OCI-LY7 (cell line): ENCODE measurements at regions of chr6 and their contacts with region 1.

Region 1: DNA sequence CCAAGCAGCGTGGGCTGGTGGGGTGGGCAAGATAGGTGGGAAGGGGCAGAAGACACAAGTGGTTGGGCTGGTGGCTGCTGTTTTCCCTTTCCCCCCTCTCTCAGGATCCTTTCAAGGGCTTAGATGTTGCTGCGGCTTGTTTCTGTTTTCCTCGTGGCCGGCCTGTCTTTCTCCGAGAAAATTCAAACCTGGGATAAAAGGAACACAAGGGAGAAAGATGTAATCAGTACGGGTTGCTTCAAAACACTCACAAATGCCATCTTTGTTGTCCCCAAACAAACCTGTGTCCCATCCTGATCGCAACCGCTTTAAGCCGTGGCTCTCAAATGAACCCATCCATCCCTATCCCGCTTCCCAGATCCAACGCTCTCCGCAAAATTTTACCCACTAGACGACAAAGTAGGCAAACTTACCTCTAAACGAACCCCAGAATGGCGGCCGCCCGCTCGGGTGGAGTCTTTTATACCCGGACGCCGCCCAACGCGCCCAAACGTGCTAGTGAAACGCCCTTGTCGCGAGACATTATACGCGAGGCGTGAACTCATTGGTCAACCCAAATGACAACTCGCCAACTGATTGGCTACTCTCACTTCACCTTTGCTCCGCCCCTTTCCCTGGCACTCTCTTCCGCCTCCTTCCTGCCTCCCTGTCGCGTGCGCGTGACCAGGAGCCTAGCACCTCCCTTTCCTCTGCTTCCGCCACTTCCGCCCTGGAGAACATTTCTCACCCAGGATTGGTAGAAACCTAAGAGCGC is at the start of gene PPP1R10:
- DNase-seq: peak; percentile 100
- H3K4me3 ChIP-seq: peak within 1 kb of the TSS; percentile 88
- H3K27ac ChIP-seq: peak within 1 kb of the TSS; percentile 91
- H3K4me1 ChIP-seq: peaks cover 37% of the 10 kb centered on the region
- CTCF ChIP-seq: no peak
- total RNA-seq, gene PPP1R10: 103 and 126 TPM in 2 replicates

Region 2: GRCh38 chr6:30378290-30378937 is 238.6 kb before region 1 on chr6:
- CTCF ChIA-PET with region 1: no interaction called
- POLR2A ChIA-PET with region 1: no interaction called
- intact Hi-C with region 1: no loop called
- DNase-seq: peak; percentile 8
- H3K4me3 ChIP-seq: no peak overlapping the region
- H3K27ac ChIP-seq: no peak overlapping the region
- H3K4me1 ChIP-seq: no peaks in the 10 kb centered on the region
- CTCF ChIP-seq: no peak

Region 3: DNA sequence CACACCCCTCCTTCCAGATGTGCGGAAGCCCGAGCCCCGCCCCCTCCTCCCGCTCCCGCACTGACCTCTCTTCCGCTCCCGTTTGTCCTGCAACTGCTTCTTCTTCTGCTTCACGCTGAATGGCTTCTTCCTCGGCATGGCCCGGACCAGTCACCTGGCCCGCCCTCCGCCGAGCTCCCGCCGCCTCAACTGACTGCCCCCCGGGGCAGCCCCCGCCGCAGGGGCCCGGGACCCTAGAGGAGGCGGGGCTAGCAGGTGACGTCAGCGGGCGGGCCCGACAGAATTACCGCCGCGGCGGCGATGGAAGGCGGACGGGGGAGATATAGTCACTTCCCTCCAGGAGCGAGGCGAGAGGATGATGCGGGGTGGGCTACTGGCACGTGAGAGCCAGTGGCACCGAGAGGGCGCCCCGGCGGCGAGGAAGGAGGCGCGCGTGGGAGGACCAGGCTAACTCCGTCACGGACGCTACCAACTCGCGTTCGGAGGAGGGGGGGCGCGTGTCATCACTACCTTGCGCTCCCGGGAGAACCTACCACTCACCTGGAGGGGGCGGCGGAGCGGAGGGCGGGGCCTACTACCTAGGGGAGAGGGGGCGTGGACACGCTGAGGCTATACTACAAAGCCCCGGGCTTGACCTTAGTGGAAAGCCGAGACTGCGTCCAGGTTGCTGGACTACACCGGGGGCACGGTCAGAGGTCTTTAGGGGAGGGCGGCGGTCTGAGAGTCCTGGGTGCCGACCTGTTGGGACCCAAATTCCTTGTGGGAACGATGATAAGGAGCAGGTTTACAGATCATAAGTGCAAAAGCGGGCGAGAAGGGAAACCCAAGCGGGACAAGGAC is 60.7 kb before region 1 on chr6 and contains the start of gene GNL1:
- CTCF ChIA-PET with region 1: no interaction called
- POLR2A ChIA-PET with region 1: no interaction called
- intact Hi-C with region 1: loop called (anchors 2 kb)
- DNase-seq: peak; percentile 97
- H3K4me3 ChIP-seq: peak within 1 kb of the TSS; percentile 84
- H3K27ac ChIP-seq: peak within 1 kb of the TSS; percentile 89
- H3K4me1 ChIP-seq: peaks cover 18% of the 10 kb centered on the region
- CTCF ChIP-seq: no peak
- total RNA-seq, gene GNL1: 51.2 and 66.4 TPM in 2 replicates

Region 4: GRCh38 chr6:30600451-30600961 is 16.5 kb before region 1 on chr6:
- CTCF ChIA-PET with region 1: no interaction called
- POLR2A ChIA-PET with region 1: interaction called, 38 read pairs
- intact Hi-C with region 1: no loop called
- DNase-seq: no peak
- H3K4me3 ChIP-seq: no peak overlapping the region
- H3K27ac ChIP-seq: no peak overlapping the region
- H3K4me1 ChIP-seq: no peaks in the 10 kb centered on the region
- CTCF ChIP-seq: no peak

Region 5: DNA sequence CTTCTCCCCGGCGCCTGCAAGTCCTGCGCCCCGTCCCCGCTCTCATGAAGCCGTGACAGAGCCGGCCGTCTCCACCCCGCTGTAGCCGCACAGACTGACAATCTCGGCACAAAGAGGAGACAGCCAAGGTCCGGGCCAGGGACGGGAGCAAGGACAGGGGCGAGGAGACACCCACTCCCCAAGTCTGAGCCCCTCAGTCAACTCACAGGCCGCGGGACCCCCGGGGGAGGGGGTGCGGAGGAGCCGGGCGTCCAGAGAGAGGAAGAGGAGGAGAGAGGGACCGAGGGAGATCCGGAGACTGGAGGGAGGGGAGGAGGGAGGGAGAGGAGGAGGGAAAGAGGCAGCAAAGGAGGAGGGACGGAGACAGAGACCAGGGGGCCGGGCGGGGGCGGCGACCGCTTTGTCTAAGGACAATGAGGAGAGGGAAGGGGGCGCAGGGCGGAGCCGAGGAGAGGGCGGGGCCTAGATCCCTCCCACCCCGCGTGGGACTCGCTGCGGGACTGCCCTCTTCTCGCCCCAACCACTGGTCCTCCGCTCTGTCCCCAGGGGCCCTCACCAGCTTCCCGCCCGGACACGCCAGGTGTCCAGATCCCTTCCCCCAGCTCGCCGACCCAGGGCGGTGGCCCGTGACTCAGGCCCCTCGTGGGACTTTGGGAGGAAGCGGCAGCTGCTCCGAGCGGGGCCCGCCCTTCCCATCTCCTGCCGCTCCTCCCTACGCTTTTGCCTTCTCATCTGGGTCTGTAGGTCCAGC is 70.1 kb after region 1 on chr6:
- CTCF ChIA-PET with region 1: no interaction called
- POLR2A ChIA-PET with region 1: no interaction called
- intact Hi-C with region 1: loop called (anchors 5 kb)
- DNase-seq: peak; percentile 98
- H3K4me3 ChIP-seq: peak overlapping the region; percentile 95
- H3K27ac ChIP-seq: peak overlapping the region; percentile 95
- H3K4me1 ChIP-seq: peaks cover 34% of the 10 kb centered on the region
- CTCF ChIP-seq: no peak

Region 6: DNA sequence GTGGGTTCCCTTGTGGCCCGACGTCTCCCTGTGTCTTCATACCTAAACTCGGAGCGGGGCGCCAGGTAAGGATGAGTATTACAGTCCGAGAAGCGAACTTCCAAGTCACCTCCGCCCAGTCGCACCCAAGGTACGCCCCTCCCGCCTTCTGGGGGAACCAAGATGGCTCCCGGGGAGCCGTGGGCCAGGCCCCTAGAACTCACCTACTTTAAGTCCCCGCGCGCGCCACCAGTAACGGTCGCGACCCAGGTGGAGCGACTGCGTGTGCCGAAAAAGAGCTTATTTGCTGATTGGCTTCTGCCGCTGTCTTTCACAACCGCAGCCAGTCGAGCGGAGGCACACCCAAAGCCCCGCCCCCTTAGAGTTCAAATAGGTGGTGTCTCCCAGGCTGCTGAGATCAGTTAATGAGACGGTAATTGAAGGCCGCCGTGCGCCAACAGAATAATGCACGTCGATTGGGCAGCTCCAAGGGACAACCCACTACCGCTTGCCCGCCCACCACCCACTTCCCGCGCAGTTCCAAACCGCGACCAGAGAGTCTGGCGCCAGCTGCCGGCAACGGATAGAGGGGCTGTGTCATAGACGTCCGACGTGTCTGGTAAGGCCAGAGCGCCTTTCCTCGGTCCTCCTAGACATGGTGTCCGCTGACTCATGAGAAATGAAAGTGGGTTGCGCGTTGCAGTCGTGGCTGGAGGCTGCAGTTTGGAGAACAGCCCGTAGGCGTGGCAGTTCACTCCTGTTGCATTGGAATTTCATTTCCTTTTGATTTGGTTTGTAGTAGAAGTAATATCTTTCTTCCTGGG is 100.3 kb after region 1 on chr6 and contains the start of gene MDC1:
- CTCF ChIA-PET with region 1: no interaction called
- POLR2A ChIA-PET with region 1: interaction called, 8 read pairs
- intact Hi-C with region 1: loop called (anchors 1 kb)
- DNase-seq: peak; percentile 100
- H3K4me3 ChIP-seq: peak within 1 kb of the TSS; percentile 91
- H3K27ac ChIP-seq: peak within 1 kb of the TSS; percentile 97
- H3K4me1 ChIP-seq: peaks cover 44% of the 10 kb centered on the region
- CTCF ChIP-seq: no peak; the same call in 1 of the 2 replicates
- total RNA-seq, gene MDC1: 35.0 and 41.6 TPM in 2 replicates

Region 7: GRCh38 chr6:30942338-30943060 is 325.5 kb after region 1 on chr6:
- CTCF ChIA-PET with region 1: no interaction called
- POLR2A ChIA-PET with region 1: no interaction called
- intact Hi-C with region 1: no loop called
- DNase-seq: no peak
- H3K4me3 ChIP-seq: no peak overlapping the region
- H3K27ac ChIP-seq: no peak overlapping the region
- H3K4me1 ChIP-seq: no peaks in the 10 kb centered on the region
- CTCF ChIP-seq: no peak

Region 8: GRCh38 chr6:31203345-31203979 is 586.5 kb after region 1 on chr6:
- CTCF ChIA-PET with region 1: no interaction called
- POLR2A ChIA-PET with region 1: no interaction called
- intact Hi-C with region 1: loop called (anchors 5 kb)
- DNase-seq: peak; percentile 74
- H3K4me3 ChIP-seq: peak overlapping the region; percentile 69
- H3K27ac ChIP-seq: peak overlapping the region; percentile 87
- H3K4me1 ChIP-seq: peaks cover 76% of the 10 kb centered on the region
- CTCF ChIP-seq: no peak